K562 (cell line): ENCODE measurements at regions of chr1 and their contacts with region 1.

Region 1: DNA sequence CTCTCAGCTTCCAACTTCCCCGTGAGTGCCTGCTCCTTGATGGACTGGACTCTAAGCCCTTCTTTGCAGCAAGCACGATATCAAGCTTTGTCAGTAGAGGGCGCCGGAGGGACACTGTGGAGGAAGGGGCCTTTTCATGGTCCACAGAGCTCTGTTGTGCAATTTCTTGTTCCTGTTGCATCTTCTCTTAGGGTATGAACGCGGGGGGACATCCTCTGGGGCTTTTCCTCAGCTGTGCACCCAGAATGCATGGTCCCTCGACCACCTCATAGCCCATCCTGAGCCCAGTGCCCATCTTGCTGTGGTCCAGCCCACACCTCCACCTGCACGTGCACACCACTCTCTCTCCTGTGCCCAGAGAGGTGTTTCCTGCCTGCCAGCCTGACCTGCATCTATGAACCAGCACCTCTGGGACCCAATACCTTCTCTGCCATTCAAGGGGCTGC is 556.8 kb downstream of the PTPRU start:
- DNase-seq: peak; percentile 63 to 85 (median 71)
- ATAC-seq: peak; percentile 100
- H3K4me3 ChIP-seq: no peak overlapping the region
- H3K27ac ChIP-seq: no peak overlapping the region
- H3K4me1 ChIP-seq: no peaks in the 10 kb centered on the region
- H3K27me3 ChIP-seq: no peaks in the 10 kb centered on the region
- CTCF ChIP-seq: peak; percentile 89 to 96 (median 92)
- EP300 ChIP-seq: no peak
- POLR2A ChIP-seq: no peak
- RAD21 ChIP-seq: peak; percentile 91 to 94

Region 2: GRCh38 chr1:29633771-29634170 is 159.4 kb before region 1 on chr1:
- CTCF ChIA-PET with region 1: no interaction called
- POLR2A ChIA-PET with region 1: no interaction called
- in situ Hi-C with region 1: no loop called
- intact Hi-C with region 1: no loop called
- DNase-seq: peak in 1 of 4 experiments; percentile 27
- ATAC-seq: no peak
- H3K4me3 ChIP-seq: no peak overlapping the region
- H3K27ac ChIP-seq: no peak overlapping the region
- H3K4me1 ChIP-seq: no peaks in the 10 kb centered on the region
- H3K27me3 ChIP-seq: peaks cover 2 to 26% of the 10 kb centered on the region in 2 experiments; a peak in 3 of 5 replicates
- CTCF ChIP-seq: no peak
- EP300 ChIP-seq: no peak
- POLR2A ChIP-seq: no peak
- RAD21 ChIP-seq: no peak

Region 3: DNA sequence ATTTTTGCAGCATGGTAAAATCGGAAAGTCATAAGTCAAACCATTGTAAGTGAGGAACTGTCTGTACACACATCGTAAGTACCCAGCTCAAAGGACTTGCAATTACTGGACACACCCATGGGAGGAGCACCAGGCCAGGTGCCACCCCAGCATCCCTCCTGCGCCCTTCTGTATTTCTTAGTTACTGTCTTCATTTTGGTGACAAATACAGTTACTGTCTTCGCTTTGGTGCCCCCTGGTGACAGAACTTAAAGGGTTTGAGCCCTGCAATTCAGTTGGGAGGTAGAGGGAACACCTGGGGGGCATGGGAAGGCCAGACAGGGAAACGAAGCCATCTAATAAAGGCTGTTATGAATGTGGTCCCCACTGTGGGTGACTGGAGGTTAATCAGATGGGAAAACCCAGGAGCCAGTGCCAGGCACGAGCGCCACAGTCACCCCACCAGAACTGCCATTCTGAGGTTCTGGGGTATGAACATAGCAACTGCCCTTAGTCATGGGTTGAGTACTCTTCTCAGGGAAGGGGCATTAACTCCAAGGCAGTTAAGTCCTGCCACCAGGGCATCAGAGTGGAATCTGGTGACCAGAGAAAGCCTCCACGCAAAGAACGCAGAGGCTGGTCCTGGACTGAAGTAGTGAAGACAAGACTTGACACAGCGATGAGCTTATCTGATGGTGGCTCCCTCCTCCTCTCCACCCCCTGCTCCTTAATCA is 56.1 kb after region 1 on chr1:
- CTCF ChIA-PET with region 1: interaction called, 23 read pairs
- POLR2A ChIA-PET with region 1: no interaction called
- in situ Hi-C with region 1: no loop called
- intact Hi-C with region 1: loop called (anchors 1 kb)
- DNase-seq: peak; percentile 33 to 56 (median 48)
- ATAC-seq: peak; percentile 78
- H3K4me3 ChIP-seq: no peak overlapping the region
- H3K27ac ChIP-seq: no peak overlapping the region
- H3K4me1 ChIP-seq: no peaks in the 10 kb centered on the region
- H3K27me3 ChIP-seq: peaks cover 0 to 23% of the 10 kb centered on the region in 2 experiments; a peak in 2 of 5 replicates
- CTCF ChIP-seq: peak; percentile 63 to 71 (median 68)
- EP300 ChIP-seq: no peak
- POLR2A ChIP-seq: no peak
- RAD21 ChIP-seq: peak; percentile 42 to 58

Region 4: DNA sequence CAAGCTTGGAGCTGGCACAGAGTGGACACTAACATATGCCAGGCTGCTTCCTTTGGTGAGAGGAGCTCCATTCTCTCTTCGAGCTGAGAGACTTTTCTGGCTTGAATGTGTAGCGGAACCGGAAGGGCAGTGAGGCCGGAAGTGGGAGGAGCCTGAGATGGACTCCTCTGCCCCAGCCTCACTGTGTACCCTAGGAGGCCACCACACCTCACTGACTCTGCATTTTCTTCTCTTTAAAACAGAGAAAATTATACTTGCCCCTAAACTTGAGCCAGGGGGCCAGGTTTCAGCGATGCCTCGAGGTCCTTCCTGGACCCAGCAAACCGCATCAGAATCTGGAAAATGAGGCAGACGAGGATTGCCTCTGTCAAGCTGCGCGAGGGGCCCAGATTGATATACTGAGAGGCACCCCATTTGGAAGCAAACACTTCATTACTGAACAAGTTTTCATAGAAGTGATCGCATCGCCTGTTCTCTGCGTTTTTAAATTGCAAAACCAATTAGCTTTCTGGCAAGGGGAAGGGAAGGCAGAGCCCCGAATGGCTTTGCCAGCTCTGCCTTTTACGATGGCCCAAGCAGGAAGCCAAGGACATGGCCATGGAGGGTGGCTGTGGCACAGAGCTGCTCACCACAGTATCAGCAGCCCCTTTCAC is 151.3 kb after region 1 on chr1:
- CTCF ChIA-PET with region 1: no interaction called
- POLR2A ChIA-PET with region 1: no interaction called
- in situ Hi-C with region 1: no loop called
- intact Hi-C with region 1: no loop called
- DNase-seq: peak; percentile 29 to 52 (median 40)
- ATAC-seq: peak; percentile 95
- H3K4me3 ChIP-seq: no peak overlapping the region
- H3K27ac ChIP-seq: no peak overlapping the region
- H3K4me1 ChIP-seq: no peaks in the 10 kb centered on the region
- H3K27me3 ChIP-seq: no peaks in the 10 kb centered on the region
- CTCF ChIP-seq: no peak
- EP300 ChIP-seq: no peak
- POLR2A ChIP-seq: no peak
- RAD21 ChIP-seq: no peak

Region 5: DNA sequence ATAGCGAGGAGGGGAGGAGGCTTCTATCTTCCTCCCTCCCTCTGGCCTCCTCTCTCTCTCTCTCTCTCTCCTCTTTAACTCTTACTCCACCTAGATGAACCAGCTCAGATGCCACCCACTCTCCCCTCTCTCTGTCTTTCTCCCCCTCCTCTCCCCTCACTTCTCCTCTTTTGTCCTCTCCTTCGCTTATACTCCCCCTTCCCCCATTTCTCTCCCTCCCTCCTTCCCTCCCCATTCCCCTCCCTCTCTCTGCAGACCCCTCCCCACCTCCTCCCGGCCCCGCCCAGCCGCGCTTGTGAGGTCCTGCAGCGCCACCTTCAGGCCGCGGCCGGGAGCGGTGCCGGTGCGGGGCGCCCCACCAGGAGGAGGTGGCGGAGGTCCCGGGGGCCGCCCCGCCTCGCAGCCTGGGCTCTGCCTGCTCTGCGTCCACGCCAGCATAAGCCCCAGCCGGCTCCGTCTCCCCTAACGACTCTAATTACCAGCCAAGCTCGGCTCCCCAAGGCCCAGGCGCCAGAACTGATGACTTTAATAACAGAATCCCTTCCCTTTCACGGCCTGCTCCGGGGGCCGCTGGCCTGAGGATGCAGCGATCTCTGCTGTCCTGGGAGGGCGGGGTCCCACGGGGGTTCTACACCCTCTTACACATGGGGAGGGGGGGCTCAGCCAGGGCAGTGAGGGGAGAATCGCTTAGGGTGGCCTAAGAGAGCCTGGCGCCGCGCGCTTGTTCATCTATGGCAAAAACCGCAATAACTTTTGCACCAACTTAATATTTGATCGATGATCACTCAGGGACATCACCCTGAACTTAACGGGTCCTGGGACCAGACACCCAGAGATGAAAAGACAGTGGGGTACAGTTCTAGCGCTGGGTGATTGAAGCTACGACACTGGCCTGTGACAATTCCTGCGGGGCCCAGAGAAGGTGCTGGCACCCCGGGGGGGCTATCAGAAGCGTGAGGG is 293.0 kb after region 1 on chr1:
- CTCF ChIA-PET with region 1: no interaction called
- POLR2A ChIA-PET with region 1: no interaction called
- in situ Hi-C with region 1: loop called (anchors 10 kb)
- intact Hi-C with region 1: loop called (anchors 2 kb)
- DNase-seq: peak; percentile 66 to 85 (median 80)
- ATAC-seq: peak; percentile 94
- H3K4me3 ChIP-seq: no peak overlapping the region
- H3K27ac ChIP-seq: no peak overlapping the region
- H3K4me1 ChIP-seq: peaks cover 0 to 5% of the 10 kb centered on the region in 2 experiments; a peak in 2 of 5 replicates
- H3K27me3 ChIP-seq: peaks cover 2 to 19% of the 10 kb centered on the region in 2 experiments; a peak in 3 of 5 replicates
- CTCF ChIP-seq: peak; percentile 62 to 93 (median 75); a peak in 5 of 6 replicates
- EP300 ChIP-seq: no peak
- POLR2A ChIP-seq: no peak
- RAD21 ChIP-seq: peak; percentile 51 to 63

Region 6: DNA sequence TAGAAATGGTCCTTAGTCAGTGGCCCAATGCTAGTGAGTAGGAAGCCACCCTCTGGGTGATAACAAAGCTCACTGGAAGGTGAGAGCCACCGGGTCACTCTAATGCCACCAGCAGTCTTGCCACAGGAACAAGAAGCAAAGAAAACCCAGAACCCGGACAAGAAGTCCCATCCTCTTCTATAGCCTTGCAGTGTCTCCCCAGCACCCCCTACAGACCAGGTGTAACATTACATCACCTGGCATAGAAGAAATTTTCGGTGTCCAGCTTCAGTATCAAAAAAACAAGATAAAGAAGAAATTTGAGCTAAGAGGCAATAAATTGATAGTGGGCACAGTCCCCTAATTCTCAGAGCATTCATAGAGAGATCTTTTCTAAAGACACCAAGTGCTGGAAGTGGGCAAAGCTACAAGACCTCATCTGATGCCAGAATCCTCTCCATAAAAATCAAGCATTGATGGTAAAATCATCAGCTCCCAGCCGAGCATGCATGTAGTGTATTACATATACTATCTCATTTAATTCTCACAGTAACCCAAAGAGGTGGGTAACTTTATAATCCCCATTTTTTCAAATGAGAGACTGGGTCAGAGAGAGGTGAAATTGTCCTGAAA is 439.3 kb after region 1 on chr1:
- CTCF ChIA-PET with region 1: interaction called, 3 read pairs
- POLR2A ChIA-PET with region 1: no interaction called
- in situ Hi-C with region 1: no loop called
- intact Hi-C with region 1: loop called (anchors 5 kb)
- DNase-seq: peak; percentile 60 to 80 (median 76)
- ATAC-seq: peak; percentile 80
- H3K4me3 ChIP-seq: no peak overlapping the region
- H3K27ac ChIP-seq: no peak overlapping the region
- H3K4me1 ChIP-seq: no peaks in the 10 kb centered on the region
- H3K27me3 ChIP-seq: peaks cover 0 to 23% of the 10 kb centered on the region in 2 experiments; a peak in 1 of 5 replicates
- CTCF ChIP-seq: peak; percentile 79 to 94 (median 93)
- EP300 ChIP-seq: no peak
- POLR2A ChIP-seq: no peak
- RAD21 ChIP-seq: peak; percentile 75 to 87

Region 7: DNA sequence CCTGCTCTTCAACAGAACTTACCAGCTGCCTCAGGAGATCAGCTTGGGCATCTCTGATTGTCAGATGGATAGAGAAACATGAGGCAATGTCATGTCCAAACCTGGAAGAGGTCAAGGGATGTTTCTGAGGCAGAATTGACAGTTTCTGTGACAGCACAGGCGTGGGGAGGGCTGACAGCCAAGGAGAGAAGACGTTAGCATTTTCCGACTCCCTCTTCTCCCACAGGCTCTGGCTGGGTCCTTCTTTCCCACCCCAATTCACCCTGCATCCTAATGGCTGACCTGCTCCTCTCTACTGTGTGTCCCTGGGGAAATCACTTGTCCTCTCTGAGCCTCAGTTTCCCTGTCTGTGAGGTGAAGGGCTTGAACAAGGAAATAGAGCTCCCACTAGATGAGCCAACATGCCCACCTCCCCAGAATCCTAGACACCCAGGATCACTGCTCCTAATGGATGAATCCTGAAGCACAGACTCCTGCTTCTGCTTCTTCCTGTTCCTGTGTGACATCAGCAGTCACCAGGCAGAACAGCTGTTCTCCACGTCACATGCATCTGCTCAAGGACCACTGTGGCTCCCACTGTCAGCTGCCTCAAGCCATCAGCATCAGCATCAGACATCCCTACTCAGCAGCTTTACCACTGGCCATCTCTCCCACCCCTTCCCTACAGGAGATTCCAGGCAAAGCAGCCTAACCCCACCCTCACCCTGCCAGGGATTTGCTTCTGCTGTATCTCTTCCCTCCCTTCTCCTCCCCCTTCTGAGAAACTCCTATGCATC is 522.2 kb after region 1 on chr1:
- CTCF ChIA-PET with region 1: no interaction called
- POLR2A ChIA-PET with region 1: no interaction called
- in situ Hi-C with region 1: no loop called
- intact Hi-C with region 1: no loop called
- DNase-seq: no peak
- ATAC-seq: no peak
- H3K4me3 ChIP-seq: no peak overlapping the region
- H3K27ac ChIP-seq: no peak overlapping the region
- H3K4me1 ChIP-seq: no peaks in the 10 kb centered on the region
- H3K27me3 ChIP-seq: peaks cover 0 to 8% of the 10 kb centered on the region in 2 experiments; a peak in 3 of 5 replicates
- CTCF ChIP-seq: no peak
- EP300 ChIP-seq: no peak
- POLR2A ChIP-seq: no peak
- RAD21 ChIP-seq: no peak

Region 8: DNA sequence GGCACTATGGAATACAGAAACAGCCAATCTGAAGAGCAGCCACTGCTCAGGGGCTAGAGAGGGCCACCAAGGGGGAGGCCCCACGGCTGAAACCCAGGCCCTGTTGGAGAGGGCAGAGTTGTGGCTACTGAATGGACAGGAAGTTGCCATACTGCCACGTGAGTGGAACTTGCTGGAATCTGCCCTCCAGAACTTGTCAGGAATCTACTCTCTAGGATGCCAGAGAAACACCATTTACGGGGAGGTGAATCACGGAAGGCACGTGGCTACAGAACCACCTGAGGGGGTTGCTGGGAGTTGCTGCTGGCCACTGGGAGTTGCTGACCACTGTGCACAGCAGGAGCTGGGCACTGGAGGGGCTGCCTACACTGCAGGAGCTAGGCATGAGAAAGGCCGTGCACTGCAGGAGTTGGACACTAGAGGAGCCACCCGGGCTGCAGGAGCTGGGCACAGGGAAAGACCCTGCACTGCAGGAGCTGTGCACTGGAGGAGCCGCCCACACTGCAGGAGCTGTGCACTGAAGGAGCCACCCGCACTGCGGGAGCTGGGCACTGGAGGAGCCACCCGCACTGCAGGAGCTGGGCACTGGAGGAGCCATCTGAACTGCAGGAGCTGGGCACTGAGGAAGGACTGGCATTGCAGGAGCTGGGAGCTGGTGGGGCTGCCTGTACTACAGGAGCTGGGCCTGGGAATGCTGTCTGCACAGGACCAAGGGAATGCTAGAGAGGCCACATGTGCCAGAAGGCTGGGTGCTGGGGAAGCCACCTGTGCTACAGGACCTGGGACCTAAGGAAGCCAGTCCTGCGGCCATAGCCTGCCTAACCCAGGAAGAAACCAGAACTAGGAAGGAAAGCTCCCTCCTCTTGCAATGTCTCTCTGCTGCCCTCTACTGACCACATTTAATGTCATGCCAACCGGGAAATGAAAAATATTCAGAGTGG is 586.8 kb after region 1 on chr1:
- CTCF ChIA-PET with region 1: interaction called, 3 read pairs
- POLR2A ChIA-PET with region 1: no interaction called
- in situ Hi-C with region 1: no loop called
- intact Hi-C with region 1: loop called (anchors 1 kb)
- DNase-seq: peak; percentile 75 to 85 (median 82)
- ATAC-seq: peak; percentile 83
- H3K4me3 ChIP-seq: no peak overlapping the region
- H3K27ac ChIP-seq: no peak overlapping the region
- H3K4me1 ChIP-seq: peaks cover 0 to 4% of the 10 kb centered on the region in 2 experiments; a peak in 1 of 5 replicates
- H3K27me3 ChIP-seq: peaks cover 0 to 51% of the 10 kb centered on the region in 2 experiments; a peak in 3 of 5 replicates
- CTCF ChIP-seq: peak; percentile 81 to 97 (median 92)
- EP300 ChIP-seq: no peak
- POLR2A ChIP-seq: no peak
- RAD21 ChIP-seq: peak; percentile 65 to 85